HepG2 (cell line): ENCODE measurements at regions of chr12 and their contacts with region 1.

Region 1: GRCh38 chr12:4857472-4858291 is 52.0 kb upstream of the KCNA1 start:
- DNase-seq: peak; percentile 41
- ATAC-seq: peak; percentile 87
- H3K4me3 ChIP-seq: peak overlapping the region in 1 of 3 experiments; percentile 48; a peak in 2 of 6 replicates
- H3K27ac ChIP-seq: no peak overlapping the region
- H3K4me1 ChIP-seq: peaks cover 10% of the 10 kb centered on the region
- H3K27me3 ChIP-seq: peaks cover 0 to 56% of the 10 kb centered on the region in 2 experiments; a peak in 4 of 5 replicates
- CTCF ChIP-seq: peak; percentile 80
- EP300 ChIP-seq: no peak
- POLR2A ChIP-seq: no peak
- RAD21 ChIP-seq: no peak

Region 2: DNA sequence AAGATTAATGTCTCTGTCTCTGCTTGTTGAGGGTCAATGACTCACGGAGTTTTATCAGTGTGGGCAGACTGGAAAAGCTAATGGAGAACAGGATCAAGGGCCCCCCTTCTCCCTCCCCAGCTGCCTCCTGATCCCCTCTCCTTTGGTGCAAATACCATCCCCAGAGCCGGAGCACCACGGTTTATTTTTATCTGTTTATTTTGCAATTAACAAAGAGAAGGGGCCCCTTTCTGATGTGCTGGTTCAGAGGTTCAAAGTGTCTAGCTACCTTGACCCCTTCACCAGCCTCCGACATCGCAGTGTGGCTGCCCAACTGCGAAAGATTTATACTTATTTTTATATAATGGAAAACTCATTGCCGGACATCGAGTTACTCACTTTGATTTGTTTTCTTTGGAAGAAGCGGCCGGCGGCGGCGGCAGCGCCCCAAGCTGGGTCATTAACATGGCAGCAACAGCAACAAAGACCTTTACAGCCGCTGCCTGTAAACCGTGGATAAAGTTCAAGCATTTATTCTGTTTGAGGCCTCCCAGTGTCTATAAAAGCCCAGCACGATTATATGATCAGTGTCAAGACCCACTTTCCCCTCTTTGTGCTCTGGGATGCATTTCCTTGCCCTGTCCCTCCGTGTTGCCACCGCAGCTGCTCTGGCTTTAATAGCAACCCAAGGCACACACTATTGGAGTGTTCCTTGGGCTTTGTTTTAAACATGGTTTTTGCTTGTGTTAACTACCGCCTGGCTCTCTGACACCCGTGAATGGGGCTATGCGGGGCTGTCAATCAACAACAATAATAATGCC is 937.1 kb before region 1 on chr12:
- CTCF ChIA-PET with region 1: no interaction called
- POLR2A ChIA-PET with region 1: no interaction called
- in situ Hi-C with region 1: no loop called
- intact Hi-C with region 1: no loop called
- DNase-seq: peak; percentile 66
- ATAC-seq: peak; percentile 75
- H3K4me3 ChIP-seq: peak overlapping the region in 2 of 3 experiments; percentile 9 to 31; a peak in 2 of 6 replicates
- H3K27ac ChIP-seq: no peak overlapping the region
- H3K4me1 ChIP-seq: peaks cover 34% of the 10 kb centered on the region
- H3K27me3 ChIP-seq: peaks cover 1 to 40% of the 10 kb centered on the region in 2 experiments
- CTCF ChIP-seq: no peak
- EP300 ChIP-seq: peak in 1 of 2 experiments; percentile 58; a peak in 1 of 4 replicates
- POLR2A ChIP-seq: no peak
- RAD21 ChIP-seq: no peak

Region 3: GRCh38 chr12:5003020-5003666 is 145.5 kb after region 1 on chr12:
- CTCF ChIA-PET with region 1: interaction called, 40 read pairs
- POLR2A ChIA-PET with region 1: no interaction called
- in situ Hi-C with region 1: loop called (anchors 5 kb)
- intact Hi-C with region 1: loop called (anchors 1 kb)
- DNase-seq: peak; percentile 33
- ATAC-seq: peak; percentile 97
- H3K4me3 ChIP-seq: no peak overlapping the region
- H3K27ac ChIP-seq: no peak overlapping the region
- H3K4me1 ChIP-seq: no peaks in the 10 kb centered on the region
- H3K27me3 ChIP-seq: no peaks in the 10 kb centered on the region; a peak in 1 of 5 replicates
- CTCF ChIP-seq: peak; percentile 88
- EP300 ChIP-seq: no peak
- POLR2A ChIP-seq: no peak
- RAD21 ChIP-seq: peak; percentile 72

Region 4: GRCh38 chr12:5083955-5084849 is 226.5 kb after region 1 on chr12:
- CTCF ChIA-PET with region 1: no interaction called
- POLR2A ChIA-PET with region 1: no interaction called
- in situ Hi-C with region 1: loop called (anchors 5 kb)
- intact Hi-C with region 1: loop called (anchors 1 kb)
- DNase-seq: peak; percentile 24
- ATAC-seq: peak; percentile 59; the same call in 2 of the 3 replicates
- H3K4me3 ChIP-seq: no peak overlapping the region
- H3K27ac ChIP-seq: no peak overlapping the region
- H3K4me1 ChIP-seq: no peaks in the 10 kb centered on the region
- H3K27me3 ChIP-seq: peaks cover 2 to 10% of the 10 kb centered on the region in 2 experiments; a peak in 2 of 5 replicates
- CTCF ChIP-seq: peak; percentile 68
- EP300 ChIP-seq: no peak
- POLR2A ChIP-seq: no peak
- RAD21 ChIP-seq: no peak